Calu3 (cell line): ENCODE measurements at regions of chr4 and their contacts with region 1.

Region 1: DNA sequence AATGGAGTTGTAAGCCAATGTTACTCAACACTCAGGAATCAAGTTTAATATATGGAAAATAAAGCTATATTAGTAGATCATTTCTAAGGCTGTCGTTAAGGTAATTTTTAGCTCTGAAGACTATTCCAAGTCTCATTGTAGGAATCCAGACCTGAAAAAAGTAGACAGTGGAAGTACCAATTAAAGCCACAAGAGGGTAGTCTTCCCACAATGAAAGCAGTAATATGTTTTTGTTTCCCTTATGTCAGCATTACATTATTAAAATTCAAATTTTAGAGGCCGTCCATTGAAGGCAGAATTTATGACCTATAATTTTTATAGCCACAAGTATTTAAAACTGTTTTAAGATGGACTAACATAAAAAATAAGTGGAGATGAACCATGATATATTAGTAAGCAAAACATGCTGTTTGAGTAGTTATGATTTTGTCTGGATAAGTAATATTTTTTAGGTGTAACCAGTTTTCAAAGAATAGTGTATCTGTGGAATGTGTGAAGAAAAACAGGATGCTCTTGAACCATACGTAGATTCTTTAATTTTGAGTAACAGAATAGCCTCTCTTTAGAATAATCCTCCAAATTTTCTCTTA is 372.6 kb upstream of the TECRL start:
- DNase-seq: peak; percentile 9
- H3K4me3 Mint-ChIP-seq: no peak overlapping the region
- H3K27ac Mint-ChIP-seq: no peak overlapping the region
- H3K4me1 Mint-ChIP-seq: no peaks in the 10 kb centered on the region
- H3K27me3 Mint-ChIP-seq: no peaks in the 10 kb centered on the region
- CTCF ChIP-seq: peak; percentile 35

Region 2: DNA sequence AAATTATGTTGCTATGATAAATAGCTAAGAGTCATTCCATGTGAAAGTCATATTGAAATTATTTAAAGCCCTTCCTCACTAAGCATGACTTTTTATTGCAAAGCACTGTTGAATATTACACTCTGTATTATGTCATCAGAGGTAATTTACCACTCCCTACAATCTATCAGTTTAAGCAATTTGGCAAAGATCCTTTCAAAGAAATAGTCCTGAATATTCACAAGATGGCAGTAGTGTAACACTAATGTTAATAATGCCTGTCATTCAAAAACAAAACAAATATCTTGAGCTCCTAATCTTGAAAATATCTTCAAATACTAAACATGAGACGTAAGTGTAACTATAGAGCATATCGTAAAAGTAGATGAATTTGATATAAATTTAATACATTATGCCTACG is 164.0 kb before region 1 on chr4:
- CTCF ChIA-PET with region 1: no interaction called
- intact Hi-C with region 1: loop called (anchors 5 kb)
- DNase-seq: no peak
- H3K4me3 Mint-ChIP-seq: no peak overlapping the region
- H3K27ac Mint-ChIP-seq: no peak overlapping the region
- H3K4me1 Mint-ChIP-seq: no peaks in the 10 kb centered on the region
- H3K27me3 Mint-ChIP-seq: no peaks in the 10 kb centered on the region
- CTCF ChIP-seq: no peak

Region 3: DNA sequence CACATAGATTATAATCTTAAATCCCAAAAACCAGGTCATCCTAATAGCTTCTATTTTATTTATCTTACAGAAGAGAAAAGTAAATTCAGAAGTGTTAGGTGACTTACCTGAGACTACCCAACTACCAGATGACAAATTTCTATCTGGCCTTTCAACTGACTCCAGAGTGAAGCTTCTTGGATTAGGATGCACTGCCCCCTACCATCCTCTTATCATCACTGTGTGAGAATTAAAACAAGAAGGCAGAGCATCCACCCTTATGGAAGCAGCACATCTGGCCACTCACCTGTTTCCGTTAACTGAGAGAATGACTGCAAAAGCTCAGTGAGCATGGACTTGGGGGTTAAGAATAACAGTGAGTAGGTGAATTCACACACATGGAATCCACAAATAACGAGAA is 130.0 kb after region 1 on chr4:
- CTCF ChIA-PET with region 1: no interaction called
- intact Hi-C with region 1: loop called (anchors 5 kb)
- DNase-seq: no peak
- H3K4me3 Mint-ChIP-seq: no peak overlapping the region
- H3K27ac Mint-ChIP-seq: no peak overlapping the region
- H3K4me1 Mint-ChIP-seq: no peaks in the 10 kb centered on the region
- H3K27me3 Mint-ChIP-seq: no peaks in the 10 kb centered on the region
- CTCF ChIP-seq: no peak

Region 4: GRCh38 chr4:65007841-65008439 is 226.1 kb after region 1 on chr4:
- CTCF ChIA-PET with region 1: no interaction called
- intact Hi-C with region 1: loop called (anchors 10 kb)
- DNase-seq: peak; percentile 8
- H3K4me3 Mint-ChIP-seq: no peak overlapping the region
- H3K27ac Mint-ChIP-seq: no peak overlapping the region
- H3K4me1 Mint-ChIP-seq: no peaks in the 10 kb centered on the region
- H3K27me3 Mint-ChIP-seq: no peaks in the 10 kb centered on the region
- CTCF ChIP-seq: peak; percentile 13